PC-3 (cell line): ENCODE measurements at regions of chr7 and their contacts with region 1.

Region 1: GRCh38 chr7:33185786-33186185 is 56.4 kb downstream of the BBS9 start:
- DNase-seq: peak; percentile 70
- ATAC-seq: peak; percentile 98
- H3K4me3 ChIP-seq: no peak overlapping the region
- H3K27ac ChIP-seq: no peak overlapping the region
- H3K4me1 ChIP-seq: no peaks in the 10 kb centered on the region
- H3K27me3 ChIP-seq: no peaks in the 10 kb centered on the region
- CTCF ChIP-seq: peak; percentile 85

Region 2: DNA sequence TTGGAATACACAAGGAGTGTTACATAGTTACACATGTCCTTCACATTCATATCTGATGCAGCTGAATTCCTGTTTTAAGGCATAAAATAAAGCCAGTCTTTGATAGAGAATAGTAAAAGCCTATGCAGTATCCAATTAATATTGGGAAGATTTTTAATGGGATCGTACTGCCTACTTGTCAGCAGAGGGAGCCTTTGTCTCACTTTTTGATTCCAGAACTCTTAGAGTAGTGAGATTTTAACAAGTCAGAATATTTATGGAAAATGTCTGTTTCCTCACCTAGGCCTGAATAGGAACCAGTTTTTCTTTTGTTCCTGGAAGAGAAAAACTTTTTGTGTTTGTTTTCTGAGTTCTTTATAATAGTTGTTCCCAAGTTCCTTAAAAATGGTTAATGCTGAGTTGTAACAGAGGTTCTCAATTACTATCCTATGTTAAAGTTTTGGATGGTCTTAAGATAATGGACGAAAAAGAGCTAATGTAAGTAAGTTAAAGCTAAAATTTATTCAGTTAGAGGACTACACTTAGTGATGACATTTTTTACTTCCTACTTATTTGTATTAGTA is 57.6 kb after region 1 on chr7:
- CTCF ChIA-PET with region 1: no interaction called
- POLR2A ChIA-PET with region 1: no interaction called
- intact Hi-C with region 1: loop called (anchors 2 kb)
- DNase-seq: peak; percentile 63
- ATAC-seq: peak; percentile 88
- H3K4me3 ChIP-seq: no peak overlapping the region
- H3K27ac ChIP-seq: no peak overlapping the region
- H3K4me1 ChIP-seq: no peaks in the 10 kb centered on the region
- H3K27me3 ChIP-seq: no peaks in the 10 kb centered on the region
- CTCF ChIP-seq: peak; percentile 80

Region 3: GRCh38 chr7:33392148-33392547 is 206.4 kb after region 1 on chr7:
- CTCF ChIA-PET with region 1: interaction called, 18 read pairs
- POLR2A ChIA-PET with region 1: no interaction called
- intact Hi-C with region 1: no loop called
- DNase-seq: peak; percentile 5
- ATAC-seq: peak; percentile 70
- H3K4me3 ChIP-seq: no peak overlapping the region
- H3K27ac ChIP-seq: no peak overlapping the region
- H3K4me1 ChIP-seq: no peaks in the 10 kb centered on the region
- H3K27me3 ChIP-seq: no peaks in the 10 kb centered on the region
- CTCF ChIP-seq: no peak

Region 4: GRCh38 chr7:33757562-33758165 is 571.9 kb after region 1 on chr7:
- CTCF ChIA-PET with region 1: no interaction called
- POLR2A ChIA-PET with region 1: no interaction called
- intact Hi-C with region 1: loop called (anchors 10 kb)
- DNase-seq: peak; percentile 72
- ATAC-seq: peak; percentile 49; the same call in 1 of the 2 replicates
- H3K4me3 ChIP-seq: no peak overlapping the region
- H3K27ac ChIP-seq: no peak overlapping the region
- H3K4me1 ChIP-seq: no peaks in the 10 kb centered on the region; the same call in 1 of the 2 replicates
- H3K27me3 ChIP-seq: no peaks in the 10 kb centered on the region
- CTCF ChIP-seq: peak; percentile 66

Region 5: DNA sequence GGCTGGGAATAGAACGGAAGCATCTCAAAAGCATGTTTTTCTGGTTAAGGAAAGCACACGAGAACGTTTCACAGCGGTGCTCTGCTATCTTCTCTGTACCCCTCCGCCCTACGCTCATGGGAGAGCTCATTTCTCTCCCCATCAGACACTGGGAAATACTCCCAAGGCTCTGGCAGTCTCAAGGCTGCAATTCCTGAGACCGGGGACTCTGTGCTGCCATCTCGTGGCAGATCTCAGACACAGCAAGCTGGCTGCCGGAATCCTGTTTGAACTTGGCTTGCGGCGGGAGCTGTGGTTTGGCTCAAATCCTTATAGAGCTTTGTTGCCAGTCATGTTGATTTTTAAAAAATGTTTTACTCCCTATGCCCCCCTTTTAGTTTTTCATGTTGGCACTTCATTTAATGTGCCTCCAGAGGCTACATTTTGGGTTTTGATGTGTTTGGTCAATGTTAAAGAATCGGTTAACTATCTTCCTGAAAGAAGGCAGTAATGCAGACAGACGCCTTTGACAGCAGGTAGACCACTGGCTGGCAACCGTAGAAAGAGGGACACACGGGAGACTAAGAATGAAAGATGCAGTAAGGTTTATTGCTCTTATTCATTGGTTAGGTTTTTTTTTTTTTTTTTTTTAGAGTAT is 747.2 kb after region 1 on chr7:
- CTCF ChIA-PET with region 1: no interaction called
- POLR2A ChIA-PET with region 1: no interaction called
- intact Hi-C with region 1: loop called (anchors 2 kb)
- DNase-seq: peak; percentile 89
- ATAC-seq: peak; percentile 84
- H3K4me3 ChIP-seq: peak overlapping the region; percentile 48
- H3K27ac ChIP-seq: peak overlapping the region; percentile 51
- H3K4me1 ChIP-seq: peaks cover 21% of the 10 kb centered on the region
- H3K27me3 ChIP-seq: 0 out of 2 replicates have a peak, but pooled peaks cover 3% of the 10 kb centered on the region
- CTCF ChIP-seq: peak; percentile 90